ENCODE measurements at regions of chr15 and their contacts with region 1.

Region 1: GRCh38 chr15:51380999-51381795 is 39.7 kb downstream of the GLDN start:
- DNase-seq: peak; percentile 15 to 31
- ATAC-seq: peak; percentile 77 to 85
- H3K4me3 ChIP-seq: no peak overlapping the region
- H3K27ac ChIP-seq: no peak overlapping the region
- H3K4me1 ChIP-seq: no peaks in the 10 kb centered on the region
- H3K27me3 ChIP-seq: no peaks in the 10 kb centered on the region
- CTCF ChIP-seq: peak; percentile 67 to 82 (median 77)
- POLR2A ChIP-seq: no peak

Region 2: DNA sequence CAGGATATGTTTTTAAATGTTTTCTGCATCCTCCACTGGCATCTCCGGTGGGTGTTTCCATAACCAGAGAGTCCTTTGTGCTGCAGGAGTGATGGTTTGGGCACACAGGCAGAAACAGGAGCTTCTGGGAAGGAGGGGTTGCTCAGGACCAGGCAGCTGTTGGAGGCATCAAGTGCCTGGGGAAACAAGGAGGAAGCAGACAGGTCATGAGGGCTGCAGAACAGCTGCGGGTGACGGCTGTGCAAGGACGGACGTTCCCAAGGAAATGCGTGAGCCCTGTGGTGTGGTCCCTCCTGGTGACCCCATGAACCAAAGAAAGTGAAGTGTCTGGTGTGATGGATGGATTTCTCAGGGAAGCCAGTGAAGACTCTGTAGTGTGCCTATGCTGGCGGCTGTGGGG is 225.3 kb before region 1 on chr15:
- in situ Hi-C with region 1: loop called (anchors 5 to 25 kb)
- intact Hi-C with region 1: no loop called
- DNase-seq: no peak
- ATAC-seq: no peak
- H3K4me3 ChIP-seq: no peak overlapping the region
- H3K27ac ChIP-seq: no peak overlapping the region
- H3K4me1 ChIP-seq: no peaks in the 10 kb centered on the region
- H3K27me3 ChIP-seq: no peaks in the 10 kb centered on the region
- CTCF ChIP-seq: no peak
- POLR2A ChIP-seq: no peak

Region 3: DNA sequence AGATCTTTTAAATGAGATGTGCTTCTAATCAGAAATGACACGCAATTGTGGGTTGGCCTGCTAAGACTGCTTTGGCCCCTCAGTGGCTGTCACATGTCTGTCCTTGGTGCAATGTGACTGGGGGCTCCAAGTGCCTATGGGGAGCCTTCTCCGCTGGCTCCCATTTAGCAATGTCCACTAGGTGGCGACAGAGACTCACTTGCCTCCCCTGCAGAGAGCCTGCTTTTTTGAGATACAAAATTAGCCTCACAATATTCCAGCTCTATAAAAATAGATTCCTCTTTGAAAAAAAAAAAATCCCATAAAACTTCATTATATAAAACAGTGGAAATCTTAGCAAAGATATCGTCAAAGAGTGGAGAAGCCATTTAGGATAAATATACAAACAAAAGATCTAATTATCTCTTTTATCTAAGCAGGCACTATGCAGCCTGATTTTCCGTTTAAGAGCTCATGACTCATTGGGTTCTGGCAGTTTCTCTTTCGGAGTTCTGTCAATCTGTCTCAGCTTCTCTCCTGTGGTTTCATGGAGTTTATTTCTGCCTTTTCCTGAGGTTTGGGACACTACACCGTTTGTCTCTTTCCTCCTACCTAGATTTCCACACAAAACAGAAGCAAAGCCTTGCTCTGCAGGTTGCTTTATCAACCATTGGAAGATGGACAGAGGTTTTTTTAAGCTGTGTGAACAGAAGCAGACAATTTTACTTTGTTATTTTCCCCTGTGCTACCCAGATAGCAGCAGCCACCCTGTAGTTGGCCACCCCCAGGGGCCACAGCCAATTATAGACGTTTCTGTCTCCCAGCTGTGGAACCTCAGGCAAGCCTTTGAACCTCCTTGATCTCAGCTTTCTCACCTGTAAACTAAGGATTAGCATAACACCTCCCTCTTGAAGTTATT is 218.1 kb before region 1 on chr15:
- in situ Hi-C with region 1: loop called (anchors 5 to 25 kb)
- intact Hi-C with region 1: loop called (anchors 1 kb)
- DNase-seq: peak; percentile 41 to 62
- ATAC-seq: peak; percentile 96
- H3K4me3 ChIP-seq: peak overlapping the region in 3 of 4 donors; percentile 18 to 40 (median 33)
- H3K27ac ChIP-seq: peak overlapping the region; percentile 47 to 82 (median 61)
- H3K4me1 ChIP-seq: peaks cover 8 to 10% of the 10 kb centered on the region in 2 donors
- H3K27me3 ChIP-seq: no peaks in the 10 kb centered on the region
- CTCF ChIP-seq: peak; percentile 85 to 98 (median 94)
- POLR2A ChIP-seq: no peak

Region 4: GRCh38 chr15:51229907-51230330 is 151.3 kb before region 1 on chr15:
- in situ Hi-C with region 1: no loop called
- intact Hi-C with region 1: loop called (anchors 2 kb)
- DNase-seq: no peak
- ATAC-seq: no peak
- H3K4me3 ChIP-seq: no peak overlapping the region
- H3K27ac ChIP-seq: no peak overlapping the region
- H3K4me1 ChIP-seq: peaks cover 0 to 11% of the 10 kb centered on the region in 2 donors
- H3K27me3 ChIP-seq: no peaks in the 10 kb centered on the region
- CTCF ChIP-seq: no peak
- POLR2A ChIP-seq: no peak

Region 5: GRCh38 chr15:51281368-51281967 is 99.7 kb before region 1 on chr15:
- in situ Hi-C with region 1: loop called in 3 of 4 experiments (anchors 5 to 25 kb)
- intact Hi-C with region 1: loop called (anchors 1 kb)
- DNase-seq: peak; percentile 12 to 23
- ATAC-seq: peak; percentile 12 to 46
- H3K4me3 ChIP-seq: no peak overlapping the region
- H3K27ac ChIP-seq: no peak overlapping the region
- H3K4me1 ChIP-seq: no peaks in the 10 kb centered on the region
- H3K27me3 ChIP-seq: no peaks in the 10 kb centered on the region
- CTCF ChIP-seq: peak; percentile 17 to 60 (median 47)
- POLR2A ChIP-seq: no peak

Region 6: DNA sequence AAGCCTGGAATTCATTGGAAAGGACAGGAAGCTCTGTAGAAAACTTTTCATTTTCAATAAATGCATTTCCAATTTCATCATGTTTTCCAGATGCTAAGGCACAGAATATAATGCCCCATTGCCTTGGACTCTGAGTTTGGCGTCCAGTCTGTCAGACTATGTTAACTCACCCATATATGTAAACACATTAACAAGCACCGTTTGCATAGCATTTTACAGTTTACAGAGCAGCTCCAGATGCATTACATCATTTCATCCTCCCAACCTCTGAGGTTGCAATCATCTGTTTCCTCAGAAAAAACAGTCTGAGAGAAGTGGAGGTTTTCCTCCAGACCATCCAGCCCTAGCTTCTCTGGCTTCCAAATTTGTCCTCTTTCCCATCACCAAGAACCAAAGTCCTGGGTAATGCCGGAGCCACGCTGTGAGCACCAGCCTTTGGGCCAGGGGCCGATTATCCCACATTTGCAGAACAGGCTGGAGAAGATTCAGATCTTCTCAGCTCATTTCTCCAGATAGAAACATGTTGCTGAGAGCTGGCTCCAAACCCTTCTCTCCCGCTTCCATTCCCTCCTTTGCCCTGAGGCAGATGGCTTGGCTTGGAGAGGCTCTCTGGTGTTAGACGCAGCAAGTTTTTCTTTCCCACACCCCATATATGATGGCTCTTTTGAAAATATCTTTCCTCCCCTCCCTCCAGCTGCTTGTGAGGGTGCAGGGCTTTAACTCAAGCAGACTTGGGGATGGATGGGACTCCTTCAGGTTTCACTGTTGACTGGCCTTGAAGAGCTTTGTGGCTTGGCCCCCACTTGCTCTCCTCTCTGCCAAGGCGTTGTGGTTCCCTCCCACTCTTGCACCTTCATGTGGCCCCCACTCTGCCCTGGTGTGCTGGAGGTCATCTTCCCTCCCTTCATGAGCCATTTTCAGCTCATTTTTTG is 68.8 kb before region 1 on chr15:
- in situ Hi-C with region 1: no loop called
- intact Hi-C with region 1: no loop called
- DNase-seq: no peak
- ATAC-seq: no peak
- H3K4me3 ChIP-seq: no peak overlapping the region
- H3K27ac ChIP-seq: no peak overlapping the region
- H3K4me1 ChIP-seq: peaks cover 0 to 5% of the 10 kb centered on the region in 2 donors
- H3K27me3 ChIP-seq: no peaks in the 10 kb centered on the region
- CTCF ChIP-seq: no peak
- POLR2A ChIP-seq: no peak

Region 7: GRCh38 chr15:51327056-51327805 is 54.0 kb before region 1 on chr15:
- in situ Hi-C with region 1: no loop called
- intact Hi-C with region 1: loop called (anchors 5 kb)
- DNase-seq: no peak
- ATAC-seq: no peak
- H3K4me3 ChIP-seq: no peak overlapping the region
- H3K27ac ChIP-seq: no peak overlapping the region
- H3K4me1 ChIP-seq: no peaks in the 10 kb centered on the region
- H3K27me3 ChIP-seq: no peaks in the 10 kb centered on the region
- CTCF ChIP-seq: no peak
- POLR2A ChIP-seq: no peak

Region 8: GRCh38 chr15:51499379-51499976 is 118.3 kb after region 1 on chr15:
- in situ Hi-C with region 1: no loop called
- intact Hi-C with region 1: no loop called
- DNase-seq: no peak
- ATAC-seq: no peak
- H3K4me3 ChIP-seq: no peak overlapping the region
- H3K27ac ChIP-seq: no peak overlapping the region
- H3K4me1 ChIP-seq: no peaks in the 10 kb centered on the region
- H3K27me3 ChIP-seq: no peaks in the 10 kb centered on the region
- CTCF ChIP-seq: no peak
- POLR2A ChIP-seq: no peak